MCF 10A (cell line): ENCODE measurements at regions of chr4 and their contacts with region 1.

Region 1: DNA sequence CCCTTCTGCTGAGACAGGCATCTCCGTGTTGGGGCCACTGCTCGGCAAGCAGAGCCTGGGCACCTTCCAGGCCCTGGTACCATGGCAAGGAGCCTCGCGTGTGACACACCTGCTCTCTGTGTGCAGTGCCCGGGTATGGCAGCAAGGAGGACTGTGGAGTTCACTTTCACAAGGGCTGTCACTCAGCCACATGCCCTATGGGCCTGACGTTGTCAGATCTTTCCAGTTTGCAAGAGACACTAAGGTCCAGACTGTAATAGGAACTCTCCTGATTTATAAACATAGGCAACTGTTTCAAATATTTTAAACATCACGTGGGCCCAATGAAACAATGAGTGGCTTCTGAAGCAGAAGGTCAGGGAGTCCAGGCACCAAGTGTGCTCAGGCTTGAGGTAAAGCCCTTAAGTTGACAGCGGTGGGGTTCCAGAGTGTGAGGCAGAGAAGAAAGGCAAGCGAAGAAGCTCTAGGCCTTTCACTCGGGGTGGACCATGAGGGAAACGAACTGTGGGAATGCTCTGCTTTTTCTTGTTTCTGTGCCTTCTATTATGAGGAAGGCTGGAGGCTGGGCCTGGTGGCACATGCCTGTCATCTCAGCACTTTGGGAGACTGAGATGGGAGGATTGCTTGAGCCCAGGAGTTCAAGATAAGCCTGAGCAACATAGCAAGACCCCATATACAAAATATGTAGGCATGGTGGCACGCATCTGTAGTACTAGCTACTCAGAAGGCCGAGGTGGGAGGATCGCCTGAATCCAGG is 108.6 kb upstream of the TRIM2 start:
- DNase-seq: no peak
- H3K4me3 Mint-ChIP-seq: no peak overlapping the region
- H3K27ac Mint-ChIP-seq: no peak overlapping the region
- H3K4me1 Mint-ChIP-seq: no peaks in the 10 kb centered on the region
- H3K27me3 Mint-ChIP-seq: no peaks in the 10 kb centered on the region
- CTCF ChIP-seq: no peak

Region 2: GRCh38 chr4:152850377-152850776 is 245.2 kb before region 1 on chr4:
- CTCF ChIA-PET with region 1: no interaction called
- POLR2A ChIA-PET with region 1: no interaction called
- intact Hi-C with region 1: no loop called
- DNase-seq: peak; percentile 61
- H3K4me3 Mint-ChIP-seq: peak overlapping the region; percentile 67
- H3K27ac Mint-ChIP-seq: peak overlapping the region; percentile 74
- H3K4me1 Mint-ChIP-seq: peaks cover 22% of the 10 kb centered on the region
- H3K27me3 Mint-ChIP-seq: no peaks in the 10 kb centered on the region
- CTCF ChIP-seq: no peak

Region 3: DNA sequence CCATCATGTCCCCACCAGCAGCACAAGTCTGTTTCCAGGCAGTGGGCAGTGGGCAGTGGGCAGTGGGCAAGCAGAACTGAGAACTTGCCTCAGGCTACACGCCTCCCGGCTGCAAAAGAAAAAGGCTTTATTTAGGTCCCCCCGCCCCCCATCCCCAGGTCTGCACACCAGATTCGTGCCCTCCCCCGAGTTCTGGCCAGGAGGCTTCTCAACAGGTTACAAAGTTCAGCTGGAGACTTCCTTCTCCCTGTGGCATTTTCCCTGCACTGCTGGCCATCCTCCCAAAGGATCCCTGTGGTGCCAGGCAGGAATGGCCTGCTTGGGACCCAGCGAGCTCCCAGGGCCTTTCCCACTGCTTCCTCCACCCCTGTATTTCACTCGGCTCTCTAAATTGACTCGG is 11.6 kb after region 1 on chr4:
- CTCF ChIA-PET with region 1: interaction called, 12 read pairs
- POLR2A ChIA-PET with region 1: no interaction called
- intact Hi-C with region 1: no loop called
- DNase-seq: no peak
- H3K4me3 Mint-ChIP-seq: no peak overlapping the region
- H3K27ac Mint-ChIP-seq: no peak overlapping the region
- H3K4me1 Mint-ChIP-seq: no peaks in the 10 kb centered on the region
- H3K27me3 Mint-ChIP-seq: peaks cover 33% of the 10 kb centered on the region
- CTCF ChIP-seq: no peak